ENCODE measurements at regions of chr1 and their contacts with region 1.

Region 1: GRCh38 chr1:173409613-173410012 is 67.5 kb upstream of the PRDX6 start:
- DNase-seq: peak; percentile 94
- ATAC-seq: peak; percentile 72
- H3K4me3 ChIP-seq: no peak overlapping the region
- H3K27ac ChIP-seq: peak overlapping the region; percentile 9; the same call in 1 of the 2 replicates
- H3K4me1 ChIP-seq: peaks cover 49% of the 10 kb centered on the region
- H3K27me3 ChIP-seq: no peaks in the 10 kb centered on the region
- CTCF ChIP-seq: no peak

Region 2: DNA sequence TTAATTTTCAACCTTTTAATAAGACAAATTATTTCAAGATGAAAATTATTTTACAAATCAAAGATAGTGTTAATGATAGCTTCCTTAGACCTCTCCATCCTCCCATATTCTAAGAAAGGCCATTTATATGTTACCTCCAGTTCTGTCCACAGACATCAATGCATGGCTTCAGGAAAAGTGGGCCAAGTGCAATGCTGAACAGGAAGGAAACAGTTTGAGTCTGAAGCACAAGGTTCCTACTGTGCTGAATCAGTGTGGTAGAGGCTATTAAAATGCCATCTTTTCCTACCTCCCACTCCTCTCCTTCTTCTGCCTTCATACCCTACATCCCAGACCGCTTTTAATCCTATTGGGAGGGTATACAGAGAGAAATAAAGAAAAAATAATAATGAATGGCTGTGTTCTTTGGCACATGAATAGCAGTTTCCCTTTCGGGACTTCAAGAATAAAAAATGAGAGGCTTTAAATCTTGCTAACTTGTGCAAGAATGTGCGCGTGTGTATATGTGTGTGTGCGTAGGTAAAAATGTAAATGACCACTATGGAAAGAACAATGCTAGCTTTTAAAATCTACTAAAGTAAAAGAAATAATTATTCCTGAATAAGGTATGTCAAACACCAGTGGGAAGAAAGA is 1051.7 kb before region 1 on chr1:
- CTCF ChIA-PET with region 1: no interaction called
- POLR2A ChIA-PET with region 1: no interaction called
- intact Hi-C with region 1: no loop called
- DNase-seq: no peak
- ATAC-seq: no peak
- H3K4me3 ChIP-seq: peak overlapping the region; percentile 51; the same call in 1 of the 2 replicates
- H3K27ac ChIP-seq: peak overlapping the region; percentile 84
- H3K4me1 ChIP-seq: peaks cover 69% of the 10 kb centered on the region
- H3K27me3 ChIP-seq: no peaks in the 10 kb centered on the region
- CTCF ChIP-seq: no peak

Region 3: DNA sequence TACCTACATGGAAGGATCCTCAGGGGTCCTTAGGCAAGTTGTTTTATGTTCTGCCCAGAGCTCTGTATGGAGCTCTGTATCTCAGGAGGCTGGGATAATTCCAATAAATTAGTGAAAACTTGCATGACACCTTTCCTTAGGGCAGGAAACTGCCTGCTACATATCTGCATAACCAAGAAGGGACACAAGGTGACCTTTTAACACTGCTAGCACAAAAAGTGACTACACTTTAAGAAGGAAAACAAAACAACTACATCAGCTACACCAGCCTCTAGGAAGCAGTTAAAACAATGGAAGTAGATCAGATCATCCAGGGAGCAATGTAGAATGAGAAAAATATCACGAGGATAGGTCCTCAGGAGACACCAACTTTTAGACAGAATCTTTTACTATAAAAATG is 452.7 kb before region 1 on chr1:
- CTCF ChIA-PET with region 1: interaction called, 10 read pairs
- POLR2A ChIA-PET with region 1: no interaction called
- intact Hi-C with region 1: no loop called
- DNase-seq: no peak
- ATAC-seq: no peak
- H3K4me3 ChIP-seq: no peak overlapping the region
- H3K27ac ChIP-seq: no peak overlapping the region
- H3K4me1 ChIP-seq: peaks cover 12% of the 10 kb centered on the region
- H3K27me3 ChIP-seq: no peaks in the 10 kb centered on the region
- CTCF ChIP-seq: no peak

Region 4: DNA sequence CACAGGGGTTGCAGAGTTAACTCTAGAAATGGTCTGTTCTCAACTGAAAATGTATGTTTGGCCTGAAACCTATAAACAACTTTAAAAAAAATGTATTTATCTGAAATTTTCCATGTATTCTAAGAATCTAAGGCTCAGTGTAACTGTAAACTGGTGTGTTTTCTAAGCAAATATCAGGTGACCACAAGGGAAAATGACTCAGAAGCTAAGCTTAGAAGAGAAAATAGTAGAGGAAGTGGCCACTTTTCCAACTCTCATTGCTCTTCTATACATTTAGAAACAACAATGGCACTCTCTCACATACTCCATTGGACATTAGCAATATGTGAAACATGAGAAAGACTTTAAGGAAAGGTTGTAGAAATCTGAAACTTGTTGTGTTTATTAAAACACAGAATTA is 366.4 kb before region 1 on chr1:
- CTCF ChIA-PET with region 1: no interaction called
- POLR2A ChIA-PET with region 1: no interaction called
- intact Hi-C with region 1: loop called (anchors 10 kb)
- DNase-seq: peak; percentile 99
- ATAC-seq: peak; percentile 99
- H3K4me3 ChIP-seq: peak overlapping the region; percentile 1; the same call in 1 of the 2 replicates
- H3K27ac ChIP-seq: peak overlapping the region; percentile 33
- H3K4me1 ChIP-seq: peaks cover 27% of the 10 kb centered on the region
- H3K27me3 ChIP-seq: no peaks in the 10 kb centered on the region
- CTCF ChIP-seq: no peak

Region 5: GRCh38 chr1:173134029-173134428 is 275.6 kb before region 1 on chr1:
- CTCF ChIA-PET with region 1: no interaction called
- POLR2A ChIA-PET with region 1: no interaction called
- intact Hi-C with region 1: no loop called
- DNase-seq: peak; percentile 64
- ATAC-seq: peak; percentile 86
- H3K4me3 ChIP-seq: no peak overlapping the region
- H3K27ac ChIP-seq: no peak overlapping the region
- H3K4me1 ChIP-seq: no peaks in the 10 kb centered on the region
- H3K27me3 ChIP-seq: no peaks in the 10 kb centered on the region
- CTCF ChIP-seq: no peak

Region 6: DNA sequence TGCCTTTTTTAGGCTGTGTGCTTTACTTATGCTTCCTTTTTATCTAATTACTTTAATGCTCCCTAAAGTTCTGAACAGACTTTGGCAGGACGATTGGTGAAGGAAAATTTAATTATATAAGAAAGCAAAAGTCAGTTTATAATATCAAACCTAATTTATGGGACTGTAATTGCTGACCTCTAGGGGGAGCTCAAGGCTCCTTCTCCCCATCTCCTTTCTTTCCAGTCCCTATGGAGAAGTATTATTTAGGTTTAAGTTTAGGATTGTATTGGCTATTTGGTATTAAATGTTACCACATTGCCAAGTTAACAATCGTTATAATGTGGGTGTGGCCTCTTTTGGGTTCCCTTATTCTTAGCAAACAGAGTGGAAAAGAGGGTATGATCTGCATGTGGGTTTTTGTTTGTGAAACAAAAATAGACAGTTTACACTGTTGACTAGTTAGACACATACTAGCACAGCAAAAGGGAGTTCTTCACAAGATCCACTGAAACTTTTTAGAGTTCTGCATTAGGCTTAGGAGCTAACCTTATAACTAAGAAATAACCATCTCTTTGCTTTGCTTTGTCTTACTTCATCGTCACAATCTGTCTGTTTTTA is 154.3 kb before region 1 on chr1:
- CTCF ChIA-PET with region 1: interaction called, 6 read pairs
- POLR2A ChIA-PET with region 1: interaction called, 4 read pairs
- intact Hi-C with region 1: loop called (anchors 1 kb)
- DNase-seq: peak; percentile 90
- ATAC-seq: peak; percentile 90
- H3K4me3 ChIP-seq: no peak overlapping the region
- H3K27ac ChIP-seq: no peak overlapping the region
- H3K4me1 ChIP-seq: no peaks in the 10 kb centered on the region
- H3K27me3 ChIP-seq: no peaks in the 10 kb centered on the region
- CTCF ChIP-seq: peak; percentile 100

Region 7: GRCh38 chr1:173330149-173330951 is 79.3 kb before region 1 on chr1:
- CTCF ChIA-PET with region 1: no interaction called
- POLR2A ChIA-PET with region 1: interaction called, 3 read pairs
- intact Hi-C with region 1: loop called (anchors 2 kb)
- DNase-seq: peak; percentile 94
- ATAC-seq: peak; percentile 52
- H3K4me3 ChIP-seq: no peak overlapping the region
- H3K27ac ChIP-seq: peak overlapping the region; percentile 32; the same call in 1 of the 2 replicates
- H3K4me1 ChIP-seq: peaks cover 26% of the 10 kb centered on the region
- H3K27me3 ChIP-seq: no peaks in the 10 kb centered on the region
- CTCF ChIP-seq: no peak